Sciatic nerve (tissue), 2 donors: ENCODE measurements at regions of chr16 and their contacts with region 1.

Region 1: DNA sequence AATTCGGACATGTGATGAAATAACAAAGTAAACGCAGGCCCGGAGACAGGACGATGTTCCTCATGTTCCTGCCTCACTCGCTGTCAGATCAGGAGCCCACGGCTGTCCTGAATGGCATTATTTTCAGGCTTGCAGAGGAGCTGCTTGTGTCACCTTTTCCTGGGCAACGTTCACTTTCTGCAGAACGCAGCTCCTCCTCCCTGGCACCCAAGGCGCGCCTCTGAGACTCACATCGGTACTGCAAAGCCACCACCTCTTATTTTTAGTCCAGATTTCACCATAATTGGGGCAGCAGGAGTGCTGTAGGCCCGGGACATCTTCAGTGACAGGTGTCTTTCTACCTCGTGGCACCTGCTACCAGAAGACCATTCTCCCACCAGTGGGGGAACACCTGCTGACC is 8.0 kb upstream of the C16orf96 start:
- DNase-seq: no peak
- ATAC-seq: no peak

Region 2: GRCh38 chr16:4511441-4512082 is 36.6 kb before region 1 on chr16:
- intact Hi-C with region 1: loop called (anchors 5 kb)
- DNase-seq: no peak
- ATAC-seq: peak; percentile 14

Region 3: DNA sequence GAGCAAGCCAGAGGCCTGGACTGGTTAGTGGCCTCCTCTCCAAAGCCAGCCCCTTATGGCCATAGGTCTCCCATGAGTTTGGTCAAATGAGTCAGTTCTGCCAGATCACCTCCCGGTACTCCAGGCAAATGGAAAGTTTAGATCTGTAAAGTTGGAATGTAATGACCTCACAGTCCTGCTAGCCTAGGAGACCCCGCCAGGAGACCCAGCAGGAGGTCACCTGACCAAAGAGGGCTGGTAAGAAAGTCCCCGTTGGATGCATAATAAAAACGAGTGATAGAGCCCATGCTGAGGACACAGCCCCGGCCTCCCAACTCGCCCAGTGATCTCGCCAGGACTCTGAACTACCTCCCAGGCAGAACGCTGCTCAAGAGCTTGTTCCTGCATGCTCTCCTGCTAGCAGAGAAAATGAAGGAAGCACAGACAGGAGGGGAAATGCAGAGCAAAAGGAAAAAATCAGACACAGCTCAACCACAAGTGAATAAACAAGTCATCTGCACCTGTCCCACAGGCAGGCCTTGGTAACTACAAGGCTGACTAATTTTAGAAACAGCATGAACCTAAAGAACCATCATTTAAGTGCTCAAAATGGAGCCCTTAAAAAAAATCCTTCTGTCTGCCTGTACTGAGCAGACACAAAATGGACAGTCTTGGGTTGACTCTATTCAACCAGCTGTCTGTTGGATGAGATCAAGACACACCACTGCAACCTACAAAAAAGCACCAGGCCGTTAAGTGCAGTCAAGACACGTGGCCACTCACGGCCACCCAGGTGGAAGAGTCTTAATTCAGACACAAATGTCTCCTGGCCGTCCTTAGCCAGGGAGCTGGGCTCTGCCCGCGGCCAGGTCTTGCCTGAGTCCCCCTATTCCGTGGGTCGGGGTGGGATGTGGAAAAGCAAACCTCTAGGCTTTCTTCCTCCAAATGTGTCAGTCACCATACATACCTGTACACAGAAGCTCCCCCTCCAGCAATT is 18.8 kb before region 1 on chr16:
- intact Hi-C with region 1: no loop called
- DNase-seq: no peak
- ATAC-seq: peak; percentile 16